B cell (primary cell): ENCODE measurements at regions of chr14 and their contacts with region 1.

Region 1: GRCh38 chr14:23057757-23058653 is 685 bp upstream of the CDH24 start:
- DNase-seq: peak; percentile 89
- ATAC-seq: peak; percentile 64
- H3K4me3 ChIP-seq: peak overlapping the region; percentile 11 to 91 (median 68)
- H3K4me3 Mint-ChIP-seq: peak overlapping the region; percentile 95
- H3K27ac ChIP-seq: no peak overlapping the region
- H3K27ac Mint-ChIP-seq: peak overlapping the region; percentile 76
- H3K4me1 ChIP-seq: peaks cover 10 to 21% of the 10 kb centered on the region in 2 donors
- H3K4me1 Mint-ChIP-seq: peaks cover 18% of the 10 kb centered on the region
- H3K27me3 ChIP-seq: peaks cover 0 to 6% (median 0%) of the 10 kb centered on the region in 4 experiments
- H3K27me3 Mint-ChIP-seq: no peaks in the 10 kb centered on the region
- CTCF ChIP-seq: peak; percentile 95

Region 2: DNA sequence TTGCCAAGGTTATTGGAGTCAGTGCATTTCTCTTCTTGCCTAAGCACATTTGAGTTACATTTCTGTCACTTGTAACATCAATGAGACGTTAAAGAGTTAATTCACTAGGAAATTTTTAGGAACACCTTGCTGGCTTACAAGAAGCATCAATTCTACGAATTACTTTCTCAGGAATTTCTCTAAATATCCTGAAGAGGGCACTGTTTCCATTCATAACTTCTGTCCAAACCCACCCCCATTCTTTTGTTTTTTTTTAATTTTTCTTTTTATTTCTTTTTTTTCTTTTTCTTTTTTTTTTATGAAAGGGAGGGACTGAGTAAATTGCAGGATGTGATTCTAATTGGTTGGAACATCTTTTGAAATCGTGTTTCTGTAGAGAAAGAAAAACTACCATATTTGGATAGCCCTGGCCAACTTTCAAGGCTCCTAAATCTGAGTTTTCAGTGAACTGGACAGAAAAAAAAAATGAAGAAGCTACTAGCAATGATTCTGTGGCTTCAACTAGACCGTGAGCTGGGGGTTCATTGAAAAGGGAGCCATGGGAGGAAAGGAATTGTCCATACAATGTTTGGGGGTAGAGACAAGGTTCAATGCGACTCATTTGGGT is 754.3 kb before region 1 on chr14:
- CTCF ChIA-PET with region 1: no interaction called
- POLR2A ChIA-PET with region 1: no interaction called
- intact Hi-C with region 1: loop called (anchors 10 kb)
- DNase-seq: peak; percentile 21
- ATAC-seq: no peak
- H3K4me3 ChIP-seq: no peak overlapping the region
- H3K4me3 Mint-ChIP-seq: no peak overlapping the region
- H3K27ac ChIP-seq: no peak overlapping the region
- H3K27ac Mint-ChIP-seq: no peak overlapping the region
- H3K4me1 ChIP-seq: no peaks in the 10 kb centered on the region
- H3K4me1 Mint-ChIP-seq: no peaks in the 10 kb centered on the region
- H3K27me3 ChIP-seq: peaks cover 0 to 11% (median 8%) of the 10 kb centered on the region in 4 experiments
- H3K27me3 Mint-ChIP-seq: peaks cover 25% of the 10 kb centered on the region
- CTCF ChIP-seq: peak; percentile 85

Region 3: GRCh38 chr14:22994762-22995275 is 63.2 kb before region 1 on chr14:
- CTCF ChIA-PET with region 1: interaction called, 1,134 read pairs
- POLR2A ChIA-PET with region 1: interaction called, 7 read pairs
- intact Hi-C with region 1: loop called (anchors 1 kb)
- DNase-seq: peak; percentile 44
- ATAC-seq: peak; percentile 58
- H3K4me3 ChIP-seq: no peak overlapping the region
- H3K4me3 Mint-ChIP-seq: no peak overlapping the region
- H3K27ac ChIP-seq: no peak overlapping the region
- H3K27ac Mint-ChIP-seq: no peak overlapping the region
- H3K4me1 ChIP-seq: no peaks in the 10 kb centered on the region
- H3K4me1 Mint-ChIP-seq: peaks cover 2% of the 10 kb centered on the region
- H3K27me3 ChIP-seq: no peaks in the 10 kb centered on the region
- H3K27me3 Mint-ChIP-seq: no peaks in the 10 kb centered on the region
- CTCF ChIP-seq: peak; percentile 49

Region 4: GRCh38 chr14:23013054-23013748 is 44.8 kb before region 1 on chr14:
- CTCF ChIA-PET with region 1: interaction called, 12 read pairs
- POLR2A ChIA-PET with region 1: no interaction called
- intact Hi-C with region 1: loop called (anchors 5 kb)
- DNase-seq: no peak
- ATAC-seq: no peak
- H3K4me3 ChIP-seq: no peak overlapping the region
- H3K4me3 Mint-ChIP-seq: no peak overlapping the region
- H3K27ac ChIP-seq: no peak overlapping the region
- H3K27ac Mint-ChIP-seq: no peak overlapping the region
- H3K4me1 ChIP-seq: peaks cover 10 to 18% of the 10 kb centered on the region in 2 donors
- H3K4me1 Mint-ChIP-seq: peaks cover 21% of the 10 kb centered on the region
- H3K27me3 ChIP-seq: no peaks in the 10 kb centered on the region
- H3K27me3 Mint-ChIP-seq: no peaks in the 10 kb centered on the region
- CTCF ChIP-seq: no peak

Region 5: GRCh38 chr14:23068476-23069412 is 10.7 kb after region 1 on chr14:
- CTCF ChIA-PET with region 1: interaction called, 46 read pairs
- POLR2A ChIA-PET with region 1: interaction called, 4 read pairs
- intact Hi-C with region 1: loop called (anchors 1 kb)
- DNase-seq: peak; percentile 87
- ATAC-seq: peak; percentile 85
- H3K4me3 ChIP-seq: no peak overlapping the region
- H3K4me3 Mint-ChIP-seq: no peak overlapping the region
- H3K27ac ChIP-seq: peak overlapping the region; percentile 10 to 28
- H3K27ac Mint-ChIP-seq: peak overlapping the region; percentile 83
- H3K4me1 ChIP-seq: peaks cover 21 to 41% of the 10 kb centered on the region in 2 donors
- H3K4me1 Mint-ChIP-seq: peaks cover 38% of the 10 kb centered on the region
- H3K27me3 ChIP-seq: no peaks in the 10 kb centered on the region
- H3K27me3 Mint-ChIP-seq: no peaks in the 10 kb centered on the region
- CTCF ChIP-seq: peak; percentile 99